Activated CD4-positive, alpha-beta T cell treated with anti-CD3 and anti-CD28 coated beads for 36 hours (primary cell): ENCODE measurements at regions of chr1 and their contacts with region 1.

Region 1: DNA sequence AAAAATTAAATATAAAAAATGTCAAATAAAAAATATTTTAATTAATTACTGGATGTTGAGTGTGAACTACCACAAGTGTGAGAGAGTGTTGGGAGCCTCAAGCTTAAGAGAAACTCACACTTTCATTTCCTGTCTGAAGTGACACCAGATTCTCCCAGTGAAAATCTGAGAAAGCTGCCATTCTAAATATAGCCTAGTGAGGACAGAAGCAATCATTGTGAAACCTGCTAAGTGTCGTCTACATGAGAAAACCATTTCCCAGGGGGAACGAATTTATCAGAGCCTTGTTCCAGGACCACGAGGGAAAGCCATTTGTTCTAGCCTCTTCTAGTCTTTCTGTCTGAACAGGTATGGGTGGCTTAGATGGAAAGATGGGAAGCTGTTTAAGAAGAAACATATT is 329.3 kb upstream of the PRMT6 start:
- DNase-seq: no peak
- ATAC-seq: no peak
- H3K4me3 Mint-ChIP-seq: no peak overlapping the region
- H3K27ac Mint-ChIP-seq: no peak overlapping the region
- H3K4me1 Mint-ChIP-seq: no peaks in the 10 kb centered on the region
- H3K27me3 Mint-ChIP-seq: no peaks in the 10 kb centered on the region

Region 2: GRCh38 chr1:105894006-105894405 is 833.2 kb before region 1 on chr1:
- CTCF ChIA-PET with region 1: no interaction called
- POLR2A ChIA-PET with region 1: no interaction called
- intact Hi-C with region 1: no loop called
- DNase-seq: no peak
- ATAC-seq: no peak
- H3K4me3 Mint-ChIP-seq: no peak overlapping the region
- H3K27ac Mint-ChIP-seq: no peak overlapping the region
- H3K4me1 Mint-ChIP-seq: no peaks in the 10 kb centered on the region
- H3K27me3 Mint-ChIP-seq: no peaks in the 10 kb centered on the region

Region 3: GRCh38 chr1:106705971-106706370 is 21.2 kb before region 1 on chr1:
- CTCF ChIA-PET with region 1: no interaction called
- POLR2A ChIA-PET with region 1: no interaction called
- intact Hi-C with region 1: no loop called
- DNase-seq: no peak
- ATAC-seq: no peak
- H3K4me3 Mint-ChIP-seq: no peak overlapping the region
- H3K27ac Mint-ChIP-seq: no peak overlapping the region
- H3K4me1 Mint-ChIP-seq: no peaks in the 10 kb centered on the region
- H3K27me3 Mint-ChIP-seq: no peaks in the 10 kb centered on the region

Region 4: DNA sequence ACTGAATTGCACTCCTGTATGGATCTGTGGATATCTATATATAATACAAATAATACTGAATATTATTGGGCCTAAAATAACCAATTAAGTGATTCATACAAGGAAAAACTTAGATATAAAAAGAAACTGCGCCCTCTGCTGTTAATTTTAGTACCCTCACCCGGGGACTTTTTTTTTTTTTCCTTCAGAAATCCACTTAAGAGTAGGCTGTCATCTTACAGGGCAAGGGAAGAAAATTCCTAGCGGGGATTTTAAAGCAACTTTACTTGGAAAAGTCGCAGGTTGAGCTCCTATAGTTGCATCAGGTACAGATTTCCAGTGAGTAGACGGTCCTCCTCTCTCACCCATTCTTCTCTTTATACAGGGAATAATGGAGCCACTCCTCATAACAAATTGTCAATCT is 415.0 kb after region 1 on chr1:
- CTCF ChIA-PET with region 1: no interaction called
- POLR2A ChIA-PET with region 1: no interaction called
- intact Hi-C with region 1: loop called in 1 of 2 experiments (anchors 10 kb)
- DNase-seq: no peak
- ATAC-seq: no peak
- H3K4me3 Mint-ChIP-seq: peak overlapping the region; percentile 68
- H3K27ac Mint-ChIP-seq: no peak overlapping the region
- H3K4me1 Mint-ChIP-seq: peaks cover 18% of the 10 kb centered on the region
- H3K27me3 Mint-ChIP-seq: peaks cover 42% of the 10 kb centered on the region